Endothelial cell of umbilical vein (primary cell): ENCODE measurements at regions of chr15 and their contacts with region 1.

Region 1: DNA sequence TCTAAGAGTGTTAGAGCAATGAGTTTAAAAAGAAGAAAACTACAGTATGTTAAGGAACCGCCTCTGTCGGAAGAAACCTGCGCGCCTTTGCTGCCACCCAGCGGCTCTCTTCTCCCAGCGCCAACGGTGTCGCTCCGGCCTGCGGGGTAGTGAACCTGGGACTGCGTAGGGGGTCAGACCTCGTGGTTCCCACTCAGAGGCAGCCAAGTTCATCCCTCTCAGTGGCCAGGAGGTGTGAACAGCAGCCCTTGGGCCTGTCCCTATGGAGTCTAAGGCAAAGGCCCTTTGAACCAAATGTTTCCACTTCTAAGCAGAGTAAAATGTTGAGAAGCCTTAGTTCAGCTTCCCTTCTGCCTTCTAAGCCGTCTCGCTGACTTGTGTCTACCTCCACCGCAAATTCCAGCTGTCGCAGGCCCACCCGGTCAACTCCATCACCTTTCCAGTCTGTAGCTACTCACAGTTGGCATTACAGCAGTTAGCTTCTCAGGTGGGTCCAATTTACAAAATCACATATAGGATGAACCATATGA is 980 bp upstream of the RAB27A start:
- DNase-seq: peak; percentile 86
- H3K4me3 ChIP-seq: peak overlapping the region; percentile 63 to 97 (median 85)
- H3K27ac ChIP-seq: peak overlapping the region; percentile 60
- H3K4me1 ChIP-seq: peaks cover 10% of the 10 kb centered on the region
- H3K27me3 ChIP-seq: no peaks in the 10 kb centered on the region
- CTCF ChIP-seq: peak; percentile 87 to 96
- POLR2A ChIP-seq: no peak

Region 2: GRCh38 chr15:53962332-53963241 is 1328.0 kb before region 1 on chr15:
- CTCF ChIA-PET with region 1: no interaction called
- POLR2A ChIA-PET with region 1: no interaction called
- dilution Hi-C with region 1: no loop called
- intact Hi-C with region 1: loop called (anchors 5 kb)
- DNase-seq: peak; percentile 10
- H3K4me3 ChIP-seq: no peak overlapping the region
- H3K27ac ChIP-seq: no peak overlapping the region
- H3K4me1 ChIP-seq: no peaks in the 10 kb centered on the region
- H3K27me3 ChIP-seq: no peaks in the 10 kb centered on the region
- CTCF ChIP-seq: peak; percentile 22 to 42
- POLR2A ChIP-seq: no peak

Region 3: GRCh38 chr15:54082836-54083492 is 1207.6 kb before region 1 on chr15:
- CTCF ChIA-PET with region 1: no interaction called
- POLR2A ChIA-PET with region 1: no interaction called
- dilution Hi-C with region 1: no loop called
- intact Hi-C with region 1: loop called (anchors 10 kb)
- DNase-seq: peak; percentile 17
- H3K4me3 ChIP-seq: no peak overlapping the region
- H3K27ac ChIP-seq: no peak overlapping the region
- H3K4me1 ChIP-seq: no peaks in the 10 kb centered on the region
- H3K27me3 ChIP-seq: no peaks in the 10 kb centered on the region
- CTCF ChIP-seq: peak; percentile 64 to 74
- POLR2A ChIP-seq: no peak

Region 4: DNA sequence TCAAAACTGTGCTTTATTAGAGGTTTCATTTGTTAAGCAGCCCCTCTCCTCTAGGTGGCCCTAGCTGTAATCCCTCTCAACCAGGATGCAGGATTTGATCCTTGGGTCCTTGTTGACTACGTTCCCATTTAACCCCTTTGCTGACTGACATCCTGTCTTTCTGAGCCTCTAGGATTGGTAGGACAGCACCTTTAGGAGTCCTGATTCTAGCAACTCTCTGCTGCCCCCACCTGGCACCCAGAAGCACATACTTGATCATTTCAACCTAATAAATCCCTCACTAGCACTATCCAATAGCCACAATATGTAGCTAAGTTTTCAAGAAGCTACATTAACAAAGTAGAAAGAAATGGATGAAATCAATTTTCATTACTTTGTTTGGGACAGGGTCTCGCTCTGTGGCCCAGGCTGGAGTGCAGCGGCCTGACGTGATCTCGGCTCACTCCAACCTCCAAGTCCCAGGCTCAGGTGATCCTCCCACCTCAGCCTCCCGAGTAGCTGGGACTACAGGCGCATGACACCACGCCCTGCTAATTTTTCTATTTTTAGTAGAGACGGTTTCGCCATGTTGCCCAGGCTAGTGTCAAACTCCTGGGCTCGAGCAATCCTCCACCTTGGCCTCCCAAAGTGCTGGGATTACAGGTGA is 122.1 kb before region 1 on chr15:
- CTCF ChIA-PET with region 1: no interaction called
- POLR2A ChIA-PET with region 1: no interaction called
- dilution Hi-C with region 1: no loop called
- intact Hi-C with region 1: loop called (anchors 1 kb)
- DNase-seq: peak; percentile 77
- H3K4me3 ChIP-seq: no peak overlapping the region
- H3K27ac ChIP-seq: no peak overlapping the region
- H3K4me1 ChIP-seq: no peaks in the 10 kb centered on the region
- H3K27me3 ChIP-seq: no peaks in the 10 kb centered on the region
- CTCF ChIP-seq: peak; percentile 74 to 81
- POLR2A ChIP-seq: no peak

Region 5: GRCh38 chr15:55221090-55222011 is 69.2 kb before region 1 on chr15:
- CTCF ChIA-PET with region 1: interaction called, 61 read pairs
- POLR2A ChIA-PET with region 1: no interaction called
- dilution Hi-C with region 1: no loop called
- intact Hi-C with region 1: loop called (anchors 1 kb)
- DNase-seq: peak; percentile 21
- H3K4me3 ChIP-seq: no peak overlapping the region
- H3K27ac ChIP-seq: peak overlapping the region; percentile 12
- H3K4me1 ChIP-seq: peaks cover 5% of the 10 kb centered on the region
- H3K27me3 ChIP-seq: no peaks in the 10 kb centered on the region
- CTCF ChIP-seq: no peak
- POLR2A ChIP-seq: no peak

Region 6: DNA sequence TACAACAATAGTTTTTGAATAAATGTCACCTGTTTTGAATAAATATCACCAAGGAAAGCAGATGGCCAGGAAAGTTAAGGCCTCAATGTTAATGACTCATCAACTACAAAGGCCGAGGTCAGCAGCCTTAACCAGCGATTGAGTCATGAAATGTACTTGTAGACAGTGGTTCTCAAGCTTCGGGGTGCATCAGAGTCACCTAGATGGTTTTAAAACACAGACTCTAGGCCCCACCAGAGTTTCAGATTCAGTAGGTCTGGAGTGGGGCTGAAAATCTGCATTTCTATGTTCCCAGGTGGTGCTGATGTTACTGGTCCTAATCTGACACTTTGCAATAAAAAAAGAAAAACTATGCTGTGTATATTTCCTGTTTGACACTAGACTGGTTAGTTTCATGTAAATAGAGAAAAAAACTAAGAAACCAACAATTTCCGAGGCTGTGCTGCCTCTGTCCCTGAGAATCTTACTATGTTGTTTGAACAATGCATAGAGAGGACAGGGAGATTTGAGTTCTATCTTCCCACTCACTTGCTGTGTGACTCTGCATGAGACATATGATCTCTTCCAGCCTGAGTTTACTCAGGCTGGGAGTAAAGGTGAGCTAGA is 10.7 kb before region 1 on chr15:
- CTCF ChIA-PET with region 1: interaction called, 5 read pairs
- POLR2A ChIA-PET with region 1: no interaction called
- dilution Hi-C with region 1: no loop called
- intact Hi-C with region 1: loop called (anchors 1 kb)
- DNase-seq: peak; percentile 84
- H3K4me3 ChIP-seq: no peak overlapping the region
- H3K27ac ChIP-seq: peak overlapping the region; percentile 86
- H3K4me1 ChIP-seq: peaks cover 39% of the 10 kb centered on the region
- H3K27me3 ChIP-seq: no peaks in the 10 kb centered on the region
- CTCF ChIP-seq: no peak
- POLR2A ChIP-seq: no peak

Region 7: GRCh38 chr15:55318588-55319494 is 28.2 kb after region 1 on chr15 and contains the starts of genes PIGB and PIGBOS1:
- CTCF ChIA-PET with region 1: interaction called, 3 read pairs
- POLR2A ChIA-PET with region 1: no interaction called
- dilution Hi-C with region 1: no loop called
- intact Hi-C with region 1: loop called (anchors 1 kb)
- DNase-seq: peak; percentile 92
- H3K4me3 ChIP-seq: peak within 1 kb of the TSS; percentile 45 to 83 (median 77)
- H3K27ac ChIP-seq: peak within 1 kb of the TSS; percentile 74
- H3K4me1 ChIP-seq: peaks cover 9% of the 10 kb centered on the region
- H3K27me3 ChIP-seq: no peaks in the 10 kb centered on the region
- CTCF ChIP-seq: no peak
- POLR2A ChIP-seq: peak; percentile 77
- total RNA-seq, gene PIGB: 11.8 and 14.1 TPM in 2 replicates
- total RNA-seq, gene PIGBOS1: 12.8 and 15.1 TPM in 2 replicates